Mammary epithelial cell (primary cell): ENCODE measurements at regions of chr12 and their contacts with region 1.

Region 1: GRCh38 chr12:108633534-108634248 is at the start of gene SELPLG:
- DNase-seq: no peak
- H3K4me3 ChIP-seq: no peak within 1 kb of the TSS
- H3K27ac ChIP-seq: no peak within 1 kb of the TSS
- H3K4me1 ChIP-seq: peaks cover 25% of the 10 kb centered on the region
- H3K27me3 ChIP-seq: no peaks in the 10 kb centered on the region
- CTCF ChIP-seq: no peak
- total RNA-seq, gene SELPLG: 0.47 to 0.50 TPM

Region 2: DNA sequence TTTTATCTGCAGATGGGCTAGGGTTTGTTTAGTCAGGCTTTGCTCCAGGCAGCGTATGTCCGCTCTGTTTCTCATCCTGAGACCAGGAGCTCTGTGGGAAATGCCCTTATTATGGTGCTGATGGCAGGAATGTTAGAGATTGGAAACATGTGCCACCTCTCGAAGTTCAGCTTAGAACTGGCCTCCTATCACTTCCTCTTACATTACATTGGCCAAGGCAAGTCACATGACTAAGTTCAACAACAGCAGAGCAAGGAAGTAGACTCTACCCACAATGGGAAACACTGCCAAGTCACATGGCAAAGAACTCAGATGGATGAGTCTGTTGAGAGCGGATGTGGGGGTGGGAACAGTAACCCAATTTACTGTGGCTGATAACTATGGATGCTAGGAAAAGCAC is 666.5 kb before region 1 on chr12:
- CTCF ChIA-PET with region 1: no interaction called
- dilution Hi-C with region 1: no loop called
- in situ Hi-C with region 1: no loop called
- intact Hi-C with region 1: no loop called
- DNase-seq: no peak
- H3K4me3 ChIP-seq: no peak overlapping the region
- H3K27ac ChIP-seq: no peak overlapping the region
- H3K4me1 ChIP-seq: no peaks in the 10 kb centered on the region
- H3K27me3 ChIP-seq: no peaks in the 10 kb centered on the region
- CTCF ChIP-seq: no peak

Region 3: DNA sequence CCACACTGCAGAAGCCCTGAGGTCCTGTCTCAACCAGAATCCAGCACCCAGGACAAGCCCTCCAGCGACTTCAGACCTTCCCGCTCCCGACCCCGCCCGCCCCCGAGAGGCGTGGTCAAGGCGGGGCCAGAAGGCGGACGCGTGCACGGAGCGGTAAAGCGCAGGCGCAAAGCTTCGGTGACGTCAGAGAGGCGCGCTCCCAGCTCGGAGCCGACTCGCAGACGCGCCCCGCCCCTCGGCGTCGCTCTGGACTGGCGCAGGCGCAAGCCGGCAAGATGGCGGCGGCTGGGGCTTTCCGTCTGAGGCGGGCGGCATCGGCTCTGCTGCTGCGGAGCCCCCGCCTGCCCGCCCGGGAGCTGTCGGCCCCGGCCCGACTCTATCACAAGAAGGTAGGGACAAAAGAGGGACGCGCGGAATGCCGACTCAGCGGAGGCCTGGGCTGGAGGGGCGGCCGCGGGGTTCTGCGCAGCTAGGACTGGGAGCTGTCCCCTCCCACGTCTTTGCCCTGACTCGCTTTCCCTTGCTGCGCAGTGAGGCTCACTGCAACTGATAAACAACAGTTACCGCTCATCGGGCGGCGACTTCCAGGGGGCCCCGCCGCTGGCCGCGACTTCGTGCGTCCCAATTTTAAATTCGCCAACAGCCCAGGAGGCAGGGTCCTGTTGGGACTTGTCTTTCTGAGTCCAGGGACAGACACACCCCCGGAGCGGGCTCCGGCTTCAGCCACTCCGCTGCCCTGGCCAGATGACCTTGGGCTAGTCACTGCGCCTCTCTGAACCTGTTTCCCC is 71.1 kb before region 1 on chr12 and contains the start of gene ISCU:
- CTCF ChIA-PET with region 1: no interaction called
- dilution Hi-C with region 1: loop called (anchors 5 kb)
- in situ Hi-C with region 1: no loop called
- intact Hi-C with region 1: no loop called
- DNase-seq: peak; percentile 96
- H3K4me3 ChIP-seq: peak within 1 kb of the TSS; percentile 88
- H3K27ac ChIP-seq: peak within 1 kb of the TSS; percentile 93
- H3K4me1 ChIP-seq: peaks cover 30% of the 10 kb centered on the region
- H3K27me3 ChIP-seq: no peaks in the 10 kb centered on the region
- CTCF ChIP-seq: no peak
- total RNA-seq, gene ISCU: 55.3 to 77.6 TPM

Region 4: GRCh38 chr12:108580531-108580930 is 53.2 kb before region 1 on chr12:
- CTCF ChIA-PET with region 1: no interaction called
- dilution Hi-C with region 1: no loop called
- in situ Hi-C with region 1: no loop called
- intact Hi-C with region 1: no loop called
- DNase-seq: no peak
- H3K4me3 ChIP-seq: no peak overlapping the region
- H3K27ac ChIP-seq: no peak overlapping the region
- H3K4me1 ChIP-seq: no peaks in the 10 kb centered on the region
- H3K27me3 ChIP-seq: no peaks in the 10 kb centered on the region
- CTCF ChIP-seq: no peak

Region 5: GRCh38 chr12:108591267-108591980 is 42.3 kb before region 1 on chr12:
- CTCF ChIA-PET with region 1: no interaction called
- dilution Hi-C with region 1: loop called (anchors 5 kb)
- in situ Hi-C with region 1: no loop called
- intact Hi-C with region 1: no loop called
- DNase-seq: no peak
- H3K4me3 ChIP-seq: no peak overlapping the region
- H3K27ac ChIP-seq: no peak overlapping the region
- H3K4me1 ChIP-seq: no peaks in the 10 kb centered on the region
- H3K27me3 ChIP-seq: no peaks in the 10 kb centered on the region
- CTCF ChIP-seq: no peak